GM10248 (cell line): ENCODE measurements at regions of chr19 and their contacts with region 1.

Region 1: GRCh38 chr19:51473009-51473707 is 5.2 kb upstream of the CEACAM18 start:
- DNase-seq: peak; percentile 73
- CTCF ChIP-seq: peak; percentile 83

Region 2: DNA sequence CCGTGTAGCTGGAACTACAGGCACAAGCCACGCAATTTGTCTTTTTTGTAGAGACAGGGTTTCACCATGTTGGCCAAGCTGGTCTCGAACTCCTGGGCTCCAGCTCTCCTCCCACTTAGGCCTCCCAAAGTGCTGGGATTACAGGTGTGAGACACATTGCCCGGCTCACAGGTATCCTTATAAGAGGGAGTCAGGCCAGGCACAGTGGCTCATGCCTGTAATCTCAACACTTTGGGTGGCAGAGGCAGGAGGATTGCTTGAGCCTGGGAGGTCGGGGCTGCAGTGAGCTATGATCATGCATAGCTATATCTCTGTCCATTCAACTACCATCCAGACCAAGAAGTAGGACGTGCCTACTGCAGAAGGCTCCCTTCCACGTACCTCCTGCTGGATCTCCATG is 171.9 kb before region 1 on chr19:
- CTCF ChIA-PET with region 1: no interaction called
- POLR2A ChIA-PET with region 1: no interaction called
- DNase-seq: no peak
- CTCF ChIP-seq: no peak

Region 3: GRCh38 chr19:51448011-51448744 is 25.0 kb before region 1 on chr19:
- CTCF ChIA-PET with region 1: interaction called, 10 read pairs
- POLR2A ChIA-PET with region 1: no interaction called
- DNase-seq: no peak
- CTCF ChIP-seq: no peak

Region 4: GRCh38 chr19:51489113-51489512 is 16.0 kb after region 1 on chr19:
- CTCF ChIA-PET with region 1: interaction called, 36 read pairs
- POLR2A ChIA-PET with region 1: no interaction called
- DNase-seq: no peak
- CTCF ChIP-seq: no peak

Region 5: GRCh38 chr19:51552996-51553725 is 80.0 kb after region 1 on chr19:
- CTCF ChIA-PET with region 1: interaction called, 12 read pairs
- POLR2A ChIA-PET with region 1: no interaction called
- DNase-seq: peak; percentile 46
- CTCF ChIP-seq: no peak

Region 6: DNA sequence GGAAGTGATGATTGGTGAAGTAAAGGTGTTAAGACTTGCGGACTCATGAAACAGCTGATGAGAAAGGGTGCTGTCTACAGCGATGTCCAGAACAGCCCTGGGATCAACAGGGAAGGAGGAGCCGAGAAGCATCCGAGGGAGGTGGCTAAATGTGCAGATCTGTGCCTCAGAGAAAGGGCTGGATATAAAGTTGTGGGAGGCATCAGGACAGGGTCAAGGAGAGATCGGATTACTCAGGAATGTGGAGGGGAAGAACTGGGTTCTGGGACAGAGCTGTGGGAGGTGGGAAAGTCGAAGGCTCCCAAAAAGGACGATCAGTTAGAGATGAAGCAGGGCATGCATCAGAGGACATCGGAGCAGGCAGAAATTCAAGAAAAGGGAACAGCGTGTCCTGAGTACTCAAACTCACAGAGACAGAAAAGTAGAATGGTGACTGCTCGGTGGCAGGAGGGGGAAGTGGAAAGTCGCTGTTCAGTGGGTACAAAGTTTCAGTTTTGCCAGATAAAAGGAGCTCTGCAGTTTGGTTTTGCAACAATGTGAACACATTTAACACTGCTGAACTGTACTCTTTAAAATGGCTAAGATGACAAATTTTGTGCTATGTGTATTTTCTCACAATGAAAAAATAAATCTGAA is 171.6 kb after region 1 on chr19:
- CTCF ChIA-PET with region 1: interaction called, 11 read pairs
- POLR2A ChIA-PET with region 1: no interaction called
- DNase-seq: no peak
- CTCF ChIP-seq: no peak

Region 7: DNA sequence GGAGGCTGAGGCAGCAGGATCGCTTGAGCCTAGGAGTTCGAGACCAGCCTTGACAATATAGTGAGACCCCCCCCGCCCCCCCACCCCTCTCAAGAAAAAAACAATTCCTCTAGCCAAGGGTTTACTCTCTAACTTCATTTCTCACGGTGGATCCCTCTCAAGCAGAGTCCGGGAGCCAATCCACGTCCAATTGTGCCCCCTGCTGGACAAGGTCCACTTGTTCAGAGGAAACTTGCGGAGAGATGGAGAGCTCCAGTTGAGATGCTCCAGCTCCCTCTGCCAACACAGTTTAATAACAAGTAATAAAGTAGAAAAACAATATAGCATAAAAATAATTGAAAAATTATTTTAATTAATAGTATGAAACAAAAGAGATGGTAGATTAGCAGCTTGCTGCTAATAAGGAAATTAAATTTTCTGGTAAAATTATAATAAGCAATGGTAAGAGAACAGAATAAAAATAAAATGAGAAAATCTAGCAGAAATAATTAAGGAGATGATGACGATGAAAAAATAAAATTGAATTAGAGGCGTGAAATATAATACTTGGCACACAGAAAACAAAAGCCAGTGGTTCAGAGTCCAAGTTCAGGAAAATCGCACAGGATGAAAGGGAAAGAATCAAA is 187.9 kb after region 1 on chr19:
- CTCF ChIA-PET with region 1: interaction called, 250 read pairs
- POLR2A ChIA-PET with region 1: no interaction called
- DNase-seq: peak; percentile 58
- CTCF ChIP-seq: peak; percentile 82